Panc1 (cell line): ENCODE measurements at regions of chr2 and their contacts with region 1.

Region 1: GRCh38 chr2:53021292-53021691 is 746.3 kb upstream of the CHAC2 start:
- DNase-seq: no peak
- ATAC-seq: no peak
- H3K4me3 ChIP-seq: no peak overlapping the region
- H3K27ac ChIP-seq: no peak overlapping the region
- H3K4me1 ChIP-seq: no peaks in the 10 kb centered on the region
- H3K27me3 ChIP-seq: no peaks in the 10 kb centered on the region
- CTCF ChIP-seq: no peak

Region 2: GRCh38 chr2:53188851-53189510 is 167.7 kb after region 1 on chr2:
- CTCF ChIA-PET with region 1: interaction called, 15 read pairs
- POLR2A ChIA-PET with region 1: no interaction called
- in situ Hi-C with region 1: no loop called
- intact Hi-C with region 1: no loop called
- DNase-seq: no peak
- ATAC-seq: no peak
- H3K4me3 ChIP-seq: no peak overlapping the region
- H3K27ac ChIP-seq: no peak overlapping the region
- H3K4me1 ChIP-seq: no peaks in the 10 kb centered on the region
- H3K27me3 ChIP-seq: no peaks in the 10 kb centered on the region
- CTCF ChIP-seq: no peak